Calu3 (cell line): ENCODE measurements at regions of chr17 and their contacts with region 1.

Region 1: DNA sequence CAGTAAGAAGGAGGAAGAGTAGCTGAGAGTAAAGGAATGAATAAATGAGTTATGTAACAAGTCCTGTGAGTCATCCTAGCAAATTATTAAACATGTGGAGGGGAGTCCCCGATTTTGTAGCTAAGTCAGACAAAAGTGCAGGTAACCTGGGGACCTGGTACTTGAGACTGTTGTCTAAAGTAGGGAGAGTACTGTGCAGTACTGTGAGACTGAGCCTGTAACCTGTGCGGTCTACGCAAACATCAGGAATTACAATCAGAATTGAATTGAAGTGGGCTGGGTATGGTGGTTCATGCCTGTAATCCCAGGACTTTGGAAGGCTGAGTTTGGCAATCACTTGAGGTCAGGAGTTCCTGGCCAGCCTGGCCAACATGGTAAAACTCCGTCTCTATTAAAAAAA is 35.7 kb downstream of the IKZF3 start:
- DNase-seq: peak; percentile 100
- H3K4me3 Mint-ChIP-seq: peak overlapping the region; percentile 36
- H3K27ac Mint-ChIP-seq: peak overlapping the region; percentile 48
- H3K4me1 Mint-ChIP-seq: peaks cover 17% of the 10 kb centered on the region
- H3K27me3 Mint-ChIP-seq: no peaks in the 10 kb centered on the region
- CTCF ChIP-seq: no peak

Region 2: DNA sequence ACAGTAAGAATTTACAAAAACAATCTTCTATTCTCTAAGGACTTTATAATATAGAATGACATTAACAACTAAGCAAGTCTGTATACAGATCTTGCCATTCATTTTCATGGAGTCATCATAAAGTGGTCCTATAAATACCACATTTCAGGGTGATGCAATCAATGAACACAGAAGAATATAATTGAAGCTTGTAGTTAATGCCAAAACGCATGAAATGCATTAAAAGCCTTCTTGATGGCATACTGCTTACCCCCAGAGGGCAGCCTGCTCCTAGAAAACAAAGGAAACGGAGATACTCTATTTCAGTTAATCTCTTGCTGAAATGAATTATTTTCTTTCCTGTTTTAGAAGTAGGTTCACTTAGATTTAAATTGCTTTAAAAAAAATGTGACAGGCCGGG is 557.5 kb before region 1 on chr17:
- CTCF ChIA-PET with region 1: no interaction called
- intact Hi-C with region 1: no loop called
- DNase-seq: peak; percentile 72
- H3K4me3 Mint-ChIP-seq: no peak overlapping the region
- H3K27ac Mint-ChIP-seq: peak overlapping the region; percentile 26
- H3K4me1 Mint-ChIP-seq: no peaks in the 10 kb centered on the region
- H3K27me3 Mint-ChIP-seq: no peaks in the 10 kb centered on the region
- CTCF ChIP-seq: peak; percentile 58

Region 3: GRCh38 chr17:39605492-39606433 is 222.7 kb before region 1 on chr17:
- CTCF ChIA-PET with region 1: interaction called, 11 read pairs
- intact Hi-C with region 1: no loop called
- DNase-seq: peak; percentile 97
- H3K4me3 Mint-ChIP-seq: peak overlapping the region; percentile 61
- H3K27ac Mint-ChIP-seq: no peak overlapping the region
- H3K4me1 Mint-ChIP-seq: peaks cover 46% of the 10 kb centered on the region
- H3K27me3 Mint-ChIP-seq: peaks cover 100% of the 10 kb centered on the region
- CTCF ChIP-seq: no peak

Region 4: GRCh38 chr17:39659279-39660010 is 169.0 kb before region 1 on chr17:
- CTCF ChIA-PET with region 1: interaction called, 94 read pairs
- intact Hi-C with region 1: no loop called
- DNase-seq: peak; percentile 83
- H3K4me3 Mint-ChIP-seq: no peak overlapping the region
- H3K27ac Mint-ChIP-seq: no peak overlapping the region
- H3K4me1 Mint-ChIP-seq: peaks cover 26% of the 10 kb centered on the region
- H3K27me3 Mint-ChIP-seq: no peaks in the 10 kb centered on the region
- CTCF ChIP-seq: no peak

Region 5: GRCh38 chr17:39699818-39700147 is 128.7 kb before region 1 on chr17 and contains the start of gene ERBB2:
- CTCF ChIA-PET with region 1: interaction called, 146 read pairs
- intact Hi-C with region 1: no loop called
- DNase-seq: peak; percentile 100
- H3K4me3 Mint-ChIP-seq: peak within 1 kb of the TSS; percentile 71
- H3K27ac Mint-ChIP-seq: peak within 1 kb of the TSS; percentile 67
- H3K4me1 Mint-ChIP-seq: peaks cover 68% of the 10 kb centered on the region
- H3K27me3 Mint-ChIP-seq: no peaks in the 10 kb centered on the region
- CTCF ChIP-seq: no peak
- total RNA-seq, gene ERBB2: 4,829 and 4,830 TPM in 2 replicates

Region 6: GRCh38 chr17:39808409-39808997 is 19.9 kb before region 1 on chr17:
- CTCF ChIA-PET with region 1: interaction called, 1,210 read pairs
- intact Hi-C with region 1: loop called (anchors 1 kb)
- DNase-seq: peak; percentile 98
- H3K4me3 Mint-ChIP-seq: peak overlapping the region; percentile 1
- H3K27ac Mint-ChIP-seq: peak overlapping the region; percentile 16
- H3K4me1 Mint-ChIP-seq: peaks cover 37% of the 10 kb centered on the region
- H3K27me3 Mint-ChIP-seq: no peaks in the 10 kb centered on the region
- CTCF ChIP-seq: no peak

Region 7: DNA sequence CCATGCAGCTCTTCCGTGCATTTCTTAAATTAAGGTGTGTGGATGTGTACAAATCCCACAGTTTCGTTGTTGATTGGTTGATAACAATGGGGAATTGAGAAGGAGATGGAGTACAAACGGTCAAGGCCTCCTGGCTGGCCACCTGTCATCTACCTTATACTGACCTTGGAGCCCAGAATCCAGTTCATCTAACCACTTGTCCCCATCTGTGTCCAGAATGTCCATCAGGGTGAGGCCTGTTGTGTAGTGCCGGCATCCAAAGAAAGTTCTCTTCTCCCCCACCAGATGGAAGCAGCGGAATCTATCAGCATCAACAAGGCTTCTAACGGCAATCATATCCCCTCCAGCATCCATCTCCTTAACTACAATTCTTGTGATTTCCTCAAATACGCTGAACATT is 88.5 kb after region 1 on chr17:
- CTCF ChIA-PET with region 1: interaction called, 1,004 read pairs
- intact Hi-C with region 1: loop called (anchors 1 kb)
- DNase-seq: peak; percentile 94
- H3K4me3 Mint-ChIP-seq: no peak overlapping the region
- H3K27ac Mint-ChIP-seq: no peak overlapping the region
- H3K4me1 Mint-ChIP-seq: peaks cover 24% of the 10 kb centered on the region
- H3K27me3 Mint-ChIP-seq: no peaks in the 10 kb centered on the region
- CTCF ChIP-seq: no peak

Region 8: GRCh38 chr17:40021451-40021971 is 193.1 kb after region 1 on chr17:
- CTCF ChIA-PET with region 1: interaction called, 11 read pairs
- intact Hi-C with region 1: no loop called
- DNase-seq: peak; percentile 88
- H3K4me3 Mint-ChIP-seq: no peak overlapping the region
- H3K27ac Mint-ChIP-seq: no peak overlapping the region
- H3K4me1 Mint-ChIP-seq: peaks cover 36% of the 10 kb centered on the region
- H3K27me3 Mint-ChIP-seq: peaks cover 23% of the 10 kb centered on the region
- CTCF ChIP-seq: no peak

Region 9: GRCh38 chr17:40038882-40039513 is 210.6 kb after region 1 on chr17:
- CTCF ChIA-PET with region 1: no interaction called
- intact Hi-C with region 1: no loop called
- DNase-seq: peak; percentile 92
- H3K4me3 Mint-ChIP-seq: no peak overlapping the region
- H3K27ac Mint-ChIP-seq: no peak overlapping the region
- H3K4me1 Mint-ChIP-seq: peaks cover 8% of the 10 kb centered on the region
- H3K27me3 Mint-ChIP-seq: no peaks in the 10 kb centered on the region
- CTCF ChIP-seq: no peak